Body of pancreas (tissue), 4 donors: ENCODE measurements at regions of chr7 and their contacts with region 1.

Region 1: GRCh38 chr7:73718905-73719805 is at the start of gene STX1A:
- DNase-seq: peak; percentile 74 to 81 (median 78)
- ATAC-seq: peak; percentile 90
- H3K4me3 ChIP-seq: peak within 1 kb of the TSS; percentile 51 to 66
- H3K27ac ChIP-seq: no peak within 1 kb of the TSS
- H3K4me1 ChIP-seq: peaks cover 34% of the 10 kb centered on the region
- H3K27me3 ChIP-seq: no peaks in the 10 kb centered on the region
- CTCF ChIP-seq: no peak
- POLR2A ChIP-seq: no peak
- total RNA-seq, gene STX1A: 9.9 to 12.5 TPM

Region 2: DNA sequence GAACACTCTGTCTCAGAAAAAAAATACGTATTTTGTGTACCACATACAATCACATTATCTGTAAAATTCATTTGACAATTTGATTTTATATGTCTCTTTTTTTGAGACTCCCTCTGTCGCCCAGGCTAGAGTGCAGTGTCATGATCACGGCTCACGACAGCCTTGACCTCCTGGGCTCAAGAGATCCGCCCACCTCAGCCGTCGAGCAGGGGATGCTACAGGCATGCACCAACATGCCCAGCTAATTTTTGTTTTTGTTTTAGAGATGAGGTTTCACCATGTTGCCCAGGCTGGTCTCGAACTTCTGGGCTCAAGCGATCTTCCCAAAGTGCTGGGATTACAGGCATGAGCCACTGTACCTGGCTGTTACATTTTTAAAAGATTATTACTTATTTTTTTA is 185.4 kb before region 1 on chr7:
- intact Hi-C with region 1: no loop called
- DNase-seq: no peak
- ATAC-seq: no peak
- H3K4me3 ChIP-seq: no peak overlapping the region
- H3K27ac ChIP-seq: no peak overlapping the region
- H3K4me1 ChIP-seq: no peaks in the 10 kb centered on the region
- H3K27me3 ChIP-seq: no peaks in the 10 kb centered on the region
- CTCF ChIP-seq: no peak
- POLR2A ChIP-seq: no peak

Region 3: GRCh38 chr7:73612598-73613269 is 106.4 kb before region 1 on chr7:
- intact Hi-C with region 1: loop called (anchors 5 kb)
- DNase-seq: peak; percentile 52 to 71 (median 60)
- ATAC-seq: peak; percentile 52
- H3K4me3 ChIP-seq: no peak overlapping the region
- H3K27ac ChIP-seq: no peak overlapping the region
- H3K4me1 ChIP-seq: peaks cover 13% of the 10 kb centered on the region
- H3K27me3 ChIP-seq: no peaks in the 10 kb centered on the region
- CTCF ChIP-seq: peak in 1 of 7 experiments; percentile 8
- POLR2A ChIP-seq: no peak

Region 4: GRCh38 chr7:73678862-73679261 is 40.3 kb before region 1 on chr7:
- intact Hi-C with region 1: loop called (anchors 10 kb)
- DNase-seq: peak in 1 of 4 donors; percentile 31
- ATAC-seq: no peak
- H3K4me3 ChIP-seq: no peak overlapping the region
- H3K27ac ChIP-seq: no peak overlapping the region
- H3K4me1 ChIP-seq: peaks cover 40% of the 10 kb centered on the region
- H3K27me3 ChIP-seq: no peaks in the 10 kb centered on the region
- CTCF ChIP-seq: no peak
- POLR2A ChIP-seq: no peak

Region 5: DNA sequence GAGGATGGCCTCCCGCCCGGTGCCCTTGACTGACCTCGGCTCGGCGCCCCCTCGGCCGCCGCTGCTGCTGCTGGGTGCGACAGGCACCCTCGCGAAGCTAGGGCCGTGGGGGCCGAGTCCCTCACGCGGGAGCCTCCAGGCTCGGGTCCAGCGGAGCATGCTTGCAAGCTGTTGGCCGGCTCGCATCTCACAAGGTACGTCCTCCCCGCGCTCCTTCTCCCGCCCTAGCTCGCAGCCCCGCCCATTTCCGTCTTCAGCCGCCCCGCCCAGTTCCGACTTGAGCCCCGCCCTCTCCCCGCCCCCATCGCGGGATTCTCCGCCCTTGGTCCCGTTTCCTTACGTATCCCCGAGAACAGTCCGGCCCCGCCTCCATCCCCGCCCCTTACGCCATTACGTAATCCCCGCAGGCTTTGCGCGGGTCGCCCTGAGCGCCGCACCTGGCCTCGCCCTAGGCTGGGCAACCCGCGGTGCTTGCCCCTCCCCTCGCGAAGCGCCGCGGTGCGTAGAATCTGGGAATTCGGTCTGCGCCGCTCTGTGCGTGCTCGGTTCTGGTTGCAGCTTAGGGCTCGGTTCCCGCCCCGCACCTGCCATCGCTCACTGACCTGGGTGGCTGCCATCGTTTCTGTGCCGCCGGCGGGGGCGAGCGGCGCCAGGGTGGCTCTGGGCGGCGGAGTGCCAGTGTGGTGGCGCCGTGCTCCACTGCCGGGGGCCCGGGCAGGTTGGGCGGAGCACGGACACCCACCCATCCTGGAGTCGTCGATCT is 19.6 kb after region 1 on chr7 and contains the start of gene ABHD11:
- intact Hi-C with region 1: no loop called
- DNase-seq: peak; percentile 98 to 100 (median 99)
- ATAC-seq: peak; percentile 74
- H3K4me3 ChIP-seq: peak within 1 kb of the TSS; percentile 49 to 87
- H3K27ac ChIP-seq: peak within 1 kb of the TSS; percentile 94 to 100 (median 98)
- H3K4me1 ChIP-seq: peaks cover 83% of the 10 kb centered on the region
- H3K27me3 ChIP-seq: no peaks in the 10 kb centered on the region
- CTCF ChIP-seq: peak in 1 of 7 experiments; percentile 4
- POLR2A ChIP-seq: peak; percentile 98 to 99 (median 99)
- total RNA-seq, gene ABHD11: 21.5 to 22.7 TPM